Mammary epithelial cell (primary cell): ENCODE measurements at regions of chr22 and their contacts with region 1.

Region 1: GRCh38 chr22:50620593-50621355 is 7.2 kb downstream of the ARSA start:
- DNase-seq: peak; percentile 63
- H3K4me3 ChIP-seq: peak overlapping the region in 2 of 3 experiments; percentile 15 to 39
- H3K27ac ChIP-seq: peak overlapping the region; percentile 0
- H3K4me1 ChIP-seq: peaks cover 34% of the 10 kb centered on the region
- H3K27me3 ChIP-seq: no peaks in the 10 kb centered on the region
- CTCF ChIP-seq: no peak

Region 2: DNA sequence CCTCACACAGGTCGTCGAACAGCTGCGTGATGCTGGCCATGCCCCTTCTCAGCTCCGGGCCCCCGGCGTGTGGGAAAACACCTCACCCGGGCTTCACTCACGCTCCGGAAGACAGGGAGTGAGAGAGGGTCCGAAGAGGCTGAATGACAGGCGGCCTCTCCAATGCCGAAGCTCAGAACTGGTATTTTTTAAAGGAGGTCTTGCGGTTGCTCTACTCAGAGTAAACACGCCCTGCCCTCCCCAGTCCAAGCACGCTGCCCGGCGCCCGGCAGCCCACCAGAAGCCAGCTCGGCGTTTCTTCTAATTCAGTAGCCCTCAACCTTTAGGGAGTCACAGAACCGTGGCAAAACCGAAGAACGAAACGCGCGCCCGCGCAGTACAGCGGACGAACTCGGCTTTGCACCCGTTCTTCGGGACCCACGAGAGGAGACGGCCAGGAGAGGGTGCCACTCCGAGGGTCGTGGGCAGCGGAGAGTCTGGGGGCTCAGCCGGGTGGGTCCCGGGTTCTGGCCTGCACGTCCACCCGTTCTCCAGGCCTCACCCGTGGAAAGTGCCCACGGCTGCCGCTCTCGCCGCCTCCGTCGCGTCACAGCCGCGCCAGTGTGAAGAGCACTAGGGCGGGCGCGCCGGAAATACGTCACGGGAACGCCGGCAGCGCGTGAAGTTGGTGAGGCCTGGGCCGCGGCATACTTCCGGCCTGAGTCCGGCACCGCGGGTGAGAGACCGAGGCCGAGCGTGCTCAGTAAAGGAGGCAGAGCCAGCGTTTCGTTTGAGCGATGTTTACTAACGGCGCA is 376.2 kb before region 1 on chr22 and contains the start of gene TUBGCP6:
- CTCF ChIA-PET with region 1: interaction called, 4 read pairs
- dilution Hi-C with region 1: no loop called
- in situ Hi-C with region 1: no loop called
- intact Hi-C with region 1: loop called (anchors 1 kb)
- DNase-seq: peak; percentile 91
- H3K4me3 ChIP-seq: peak within 1 kb of the TSS; percentile 67 to 81 (median 69)
- H3K27ac ChIP-seq: peak within 1 kb of the TSS; percentile 69
- H3K4me1 ChIP-seq: peaks cover 23% of the 10 kb centered on the region
- H3K27me3 ChIP-seq: no peaks in the 10 kb centered on the region
- CTCF ChIP-seq: peak in 1 of 2 donors; percentile 28
- total RNA-seq, gene TUBGCP6: 33.0 to 34.0 TPM

Region 3: GRCh38 chr22:50399751-50400331 is 220.9 kb before region 1 on chr22:
- CTCF ChIA-PET with region 1: no interaction called
- dilution Hi-C with region 1: no loop called
- in situ Hi-C with region 1: no loop called
- intact Hi-C with region 1: loop called (anchors 5 kb)
- DNase-seq: no peak
- H3K4me3 ChIP-seq: no peak overlapping the region
- H3K27ac ChIP-seq: no peak overlapping the region
- H3K4me1 ChIP-seq: no peaks in the 10 kb centered on the region
- H3K27me3 ChIP-seq: no peaks in the 10 kb centered on the region
- CTCF ChIP-seq: peak; percentile 21 to 52

Region 4: DNA sequence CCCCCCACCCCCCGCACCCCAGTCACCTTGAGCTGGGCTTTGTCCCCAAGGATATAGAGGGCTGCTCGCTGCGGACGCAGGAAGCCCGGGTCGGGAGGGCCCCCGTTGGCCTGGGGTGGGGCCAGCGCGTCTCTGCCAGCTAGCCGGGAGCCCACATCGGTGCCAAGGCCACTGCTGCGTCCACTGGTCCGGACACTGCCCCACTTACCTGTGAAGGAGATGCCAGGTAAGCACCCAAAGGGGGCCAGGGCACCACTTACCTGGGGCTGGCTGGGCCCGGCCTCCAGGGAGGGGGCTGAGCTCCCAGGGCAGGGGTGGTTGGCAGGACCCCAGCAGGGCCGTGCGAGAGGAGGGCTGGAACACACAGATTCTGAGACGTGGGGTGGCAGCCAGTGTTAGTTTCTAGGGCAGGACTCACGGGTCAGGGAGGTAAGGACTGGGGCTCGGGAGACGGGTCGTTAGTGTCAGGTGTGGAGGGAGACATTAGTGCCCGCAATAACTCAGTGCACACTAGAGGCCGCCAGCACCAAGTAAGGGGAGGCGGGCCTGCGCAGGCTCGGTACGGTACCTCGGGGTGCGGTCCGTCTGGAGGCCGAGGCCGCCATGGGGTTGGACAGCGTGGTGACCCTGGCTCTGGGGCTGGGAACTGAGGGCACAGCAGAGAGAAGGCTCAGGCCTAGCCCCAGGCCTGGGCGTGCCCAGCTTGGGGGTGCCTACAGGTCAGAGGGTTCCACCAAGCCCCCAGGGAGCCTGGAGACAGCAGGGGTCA is 164.1 kb before region 1 on chr22:
- CTCF ChIA-PET with region 1: no interaction called
- dilution Hi-C with region 1: no loop called
- in situ Hi-C with region 1: no loop called
- intact Hi-C with region 1: no loop called
- DNase-seq: no peak
- H3K4me3 ChIP-seq: no peak overlapping the region
- H3K27ac ChIP-seq: no peak overlapping the region
- H3K4me1 ChIP-seq: no peaks in the 10 kb centered on the region
- H3K27me3 ChIP-seq: no peaks in the 10 kb centered on the region
- CTCF ChIP-seq: peak in 1 of 2 donors; percentile 25

Region 5: GRCh38 chr22:50525390-50526068 is 95.2 kb before region 1 on chr22 and contains the start of gene SCO2:
- CTCF ChIA-PET with region 1: interaction called, 8 read pairs
- dilution Hi-C with region 1: no loop called
- in situ Hi-C with region 1: no loop called
- intact Hi-C with region 1: loop called (anchors 2 kb)
- DNase-seq: peak; percentile 97
- H3K4me3 ChIP-seq: peak within 1 kb of the TSS; percentile 64 to 95 (median 86)
- H3K27ac ChIP-seq: peak within 1 kb of the TSS; percentile 39
- H3K4me1 ChIP-seq: peaks cover 27% of the 10 kb centered on the region
- H3K27me3 ChIP-seq: no peaks in the 10 kb centered on the region
- CTCF ChIP-seq: peak; percentile 18 to 60
- total RNA-seq, gene SCO2: 2.8 to 6.6 TPM

Region 6: GRCh38 chr22:50576070-50576469 is 44.7 kb before region 1 on chr22:
- CTCF ChIA-PET with region 1: no interaction called
- dilution Hi-C with region 1: loop called (anchors 5 kb)
- in situ Hi-C with region 1: no loop called
- intact Hi-C with region 1: loop called (anchors 1 kb)
- DNase-seq: peak; percentile 46
- H3K4me3 ChIP-seq: no peak overlapping the region
- H3K27ac ChIP-seq: no peak overlapping the region
- H3K4me1 ChIP-seq: no peaks in the 10 kb centered on the region
- H3K27me3 ChIP-seq: no peaks in the 10 kb centered on the region
- CTCF ChIP-seq: peak; percentile 32 to 48

Region 7: GRCh38 chr22:50606165-50606945 is 14.4 kb before region 1 on chr22:
- CTCF ChIA-PET with region 1: no interaction called
- dilution Hi-C with region 1: no loop called
- in situ Hi-C with region 1: no loop called
- intact Hi-C with region 1: no loop called
- DNase-seq: no peak
- H3K4me3 ChIP-seq: no peak overlapping the region
- H3K27ac ChIP-seq: no peak overlapping the region
- H3K4me1 ChIP-seq: no peaks in the 10 kb centered on the region
- H3K27me3 ChIP-seq: no peaks in the 10 kb centered on the region
- CTCF ChIP-seq: no peak